IMR-90 (cell line): ENCODE measurements at regions of chr14 and their contacts with region 1.

Region 1: GRCh38 chr14:20440882-20441281 is 4.9 kb upstream of the KLHL33 start:
- DNase-seq: peak; percentile 11
- ATAC-seq: no peak
- H3K4me3 ChIP-seq: no peak overlapping the region
- H3K27ac ChIP-seq: no peak overlapping the region
- H3K4me1 ChIP-seq: no peaks in the 10 kb centered on the region
- H3K27me3 ChIP-seq: peaks cover 5% of the 10 kb centered on the region; the same call in 1 of the 2 replicates
- CTCF ChIP-seq: no peak
- POLR2A ChIP-seq: no peak
- RAD21 ChIP-seq: no peak

Region 2: GRCh38 chr14:20365928-20366327 is 75.0 kb before region 1 on chr14:
- CTCF ChIA-PET with region 1: no interaction called
- POLR2A ChIA-PET with region 1: no interaction called
- dilution Hi-C with region 1: no loop called
- in situ Hi-C with region 1: no loop called
- intact Hi-C with region 1: loop called (anchors 10 kb)
- DNase-seq: no peak
- ATAC-seq: no peak
- H3K4me3 ChIP-seq: no peak overlapping the region
- H3K27ac ChIP-seq: no peak overlapping the region
- H3K4me1 ChIP-seq: no peaks in the 10 kb centered on the region
- H3K27me3 ChIP-seq: no peaks in the 10 kb centered on the region
- CTCF ChIP-seq: no peak
- POLR2A ChIP-seq: no peak
- RAD21 ChIP-seq: no peak